Mammary epithelial cell (primary cell): ENCODE measurements at regions of chr12 and their contacts with region 1.

Region 1: GRCh38 chr12:64560396-64561304 is 49.6 kb upstream of the RASSF3 start:
- DNase-seq: peak; percentile 77
- H3K4me3 ChIP-seq: no peak overlapping the region
- H3K27ac ChIP-seq: no peak overlapping the region
- H3K4me1 ChIP-seq: peaks cover 13% of the 10 kb centered on the region
- H3K27me3 ChIP-seq: no peaks in the 10 kb centered on the region
- CTCF ChIP-seq: no peak

Region 2: GRCh38 chr12:64679487-64679983 is 118.9 kb after region 1 on chr12:
- CTCF ChIA-PET with region 1: no interaction called
- dilution Hi-C with region 1: no loop called
- in situ Hi-C with region 1: no loop called
- intact Hi-C with region 1: loop called (anchors 1 kb)
- DNase-seq: peak; percentile 92
- H3K4me3 ChIP-seq: peak overlapping the region; percentile 16 to 41 (median 32)
- H3K27ac ChIP-seq: peak overlapping the region; percentile 92
- H3K4me1 ChIP-seq: peaks cover 35% of the 10 kb centered on the region
- H3K27me3 ChIP-seq: no peaks in the 10 kb centered on the region
- CTCF ChIP-seq: no peak